Activated naive CD4-positive, alpha-beta T cell treated with anti-CD3 and anti-CD28 coated beads for 36 hours (primary cell): ENCODE measurements at regions of chr9 and their contacts with region 1.

Region 1: DNA sequence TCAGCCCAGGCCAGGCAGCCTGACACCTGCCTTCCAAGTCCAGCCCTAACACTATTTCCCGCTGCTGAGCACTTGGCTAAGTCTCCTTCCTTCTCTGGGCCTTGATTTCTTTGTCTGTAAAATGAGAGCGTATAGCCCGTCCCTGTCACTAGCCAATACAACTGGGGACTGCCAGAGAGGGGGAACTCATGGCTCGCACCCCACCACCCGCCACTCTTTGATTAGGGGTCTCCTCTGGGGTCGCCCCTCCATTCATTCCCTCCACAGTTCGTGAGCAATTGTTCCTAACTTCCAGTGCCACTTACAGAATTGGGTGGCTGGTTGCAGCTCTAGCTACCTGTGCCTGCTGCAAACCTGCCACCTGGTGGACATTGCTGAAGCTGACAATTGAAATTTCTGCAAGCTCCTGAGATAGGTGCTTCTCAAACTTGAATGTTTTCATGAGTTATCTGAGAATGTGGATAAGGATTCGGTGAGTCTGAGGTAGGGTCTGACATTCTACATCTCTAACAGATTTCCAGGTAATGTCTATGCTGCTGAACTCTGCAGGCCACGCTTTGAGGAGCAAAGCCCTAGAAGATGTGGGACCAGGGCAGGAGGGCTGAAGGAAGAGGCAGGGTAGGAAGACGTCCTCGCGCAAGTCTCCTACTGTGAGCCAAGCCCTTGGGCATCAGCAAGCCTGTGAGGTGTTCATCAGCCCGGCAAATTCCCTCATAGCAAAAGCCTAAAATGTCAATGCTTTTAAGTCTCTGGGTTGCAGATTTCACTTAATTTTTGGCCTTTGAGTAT is 13.3 kb upstream of the RECK start:
- DNase-seq: peak; percentile 84
- H3K4me3 Mint-ChIP-seq: no peak overlapping the region
- H3K27ac Mint-ChIP-seq: no peak overlapping the region
- H3K4me1 Mint-ChIP-seq: no peaks in the 10 kb centered on the region
- H3K27me3 Mint-ChIP-seq: no peaks in the 10 kb centered on the region

Region 2: GRCh38 chr9:35790385-35791296 is 232.8 kb before region 1 on chr9:
- CTCF ChIA-PET with region 1: no interaction called
- intact Hi-C with region 1: loop called (anchors 5 kb)
- DNase-seq: peak; percentile 69
- H3K4me3 Mint-ChIP-seq: no peak overlapping the region
- H3K27ac Mint-ChIP-seq: no peak overlapping the region
- H3K4me1 Mint-ChIP-seq: no peaks in the 10 kb centered on the region
- H3K27me3 Mint-ChIP-seq: no peaks in the 10 kb centered on the region

Region 3: DNA sequence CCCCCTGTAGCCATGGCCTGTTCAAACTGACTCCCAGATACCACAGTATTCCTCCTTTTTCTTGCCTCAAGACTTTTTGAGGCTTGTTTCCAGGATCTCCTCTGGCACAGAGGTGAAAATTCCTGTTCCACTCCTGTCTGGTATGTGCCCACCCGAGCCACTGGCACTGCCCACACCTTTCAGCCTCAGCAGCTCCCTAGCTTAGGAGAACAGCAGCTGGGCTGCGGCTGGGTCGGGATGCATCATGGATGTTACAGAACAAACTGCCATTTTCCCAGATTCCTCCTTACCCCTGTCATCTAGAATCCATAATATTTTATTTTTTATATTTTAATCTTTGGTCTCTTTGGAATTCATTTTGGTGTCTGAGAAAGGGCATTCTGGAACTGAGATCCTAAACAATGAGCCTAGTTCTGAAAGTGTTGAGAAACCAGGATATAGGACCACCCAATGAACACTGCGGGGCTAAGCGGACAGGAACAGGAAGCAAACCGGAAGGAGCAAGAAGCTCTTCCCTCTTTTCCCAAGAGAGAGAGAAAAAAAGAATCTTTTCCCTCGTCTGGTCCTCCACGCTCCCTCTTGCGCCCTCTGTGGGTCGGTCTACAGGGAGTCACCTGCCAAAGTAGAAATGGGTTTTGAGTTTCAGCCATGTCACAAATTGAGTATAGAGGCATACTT is 78.0 kb before region 1 on chr9:
- CTCF ChIA-PET with region 1: interaction called, 21 read pairs
- intact Hi-C with region 1: no loop called
- DNase-seq: peak; percentile 86
- H3K4me3 Mint-ChIP-seq: no peak overlapping the region
- H3K27ac Mint-ChIP-seq: no peak overlapping the region
- H3K4me1 Mint-ChIP-seq: peaks cover 60% of the 10 kb centered on the region
- H3K27me3 Mint-ChIP-seq: no peaks in the 10 kb centered on the region

Region 4: GRCh38 chr9:35960039-35960655 is 63.3 kb before region 1 on chr9:
- CTCF ChIA-PET with region 1: interaction called, 59 read pairs
- intact Hi-C with region 1: loop called (anchors 1 kb)
- DNase-seq: no peak
- H3K4me3 Mint-ChIP-seq: no peak overlapping the region
- H3K27ac Mint-ChIP-seq: no peak overlapping the region
- H3K4me1 Mint-ChIP-seq: no peaks in the 10 kb centered on the region
- H3K27me3 Mint-ChIP-seq: no peaks in the 10 kb centered on the region

Region 5: GRCh38 chr9:36328798-36329411 is 305.5 kb after region 1 on chr9:
- CTCF ChIA-PET with region 1: no interaction called
- intact Hi-C with region 1: loop called (anchors 10 kb)
- DNase-seq: peak; percentile 70
- H3K4me3 Mint-ChIP-seq: no peak overlapping the region
- H3K27ac Mint-ChIP-seq: no peak overlapping the region
- H3K4me1 Mint-ChIP-seq: peaks cover 2% of the 10 kb centered on the region
- H3K27me3 Mint-ChIP-seq: no peaks in the 10 kb centered on the region